Right cardiac atrium (tissue), 5 donors: ENCODE measurements at regions of chr1 and their contacts with region 1.

Region 1: GRCh38 chr1:11645670-11646265 is 8.5 kb downstream of the FBXO2 start:
- DNase-seq: peak; percentile 81 to 92 (median 91)
- ATAC-seq: peak in 1 of 2 donors; percentile 42
- H3K4me3 ChIP-seq: no peak overlapping the region
- H3K27ac ChIP-seq: no peak overlapping the region
- H3K4me1 ChIP-seq: peaks cover 2% of the 10 kb centered on the region
- H3K27me3 ChIP-seq: no peaks in the 10 kb centered on the region

Region 2: GRCh38 chr1:11045428-11046269 is 600.1 kb before region 1 on chr1:
- intact Hi-C with region 1: loop called in 2 of 4 experiments (anchors 5 to 10 kb)
- DNase-seq: peak in 1 of 3 donors; percentile 50
- ATAC-seq: peak in 1 of 2 donors; percentile 30
- H3K4me3 ChIP-seq: no peak overlapping the region
- H3K27ac ChIP-seq: no peak overlapping the region
- H3K4me1 ChIP-seq: no peaks in the 10 kb centered on the region
- H3K27me3 ChIP-seq: no peaks in the 10 kb centered on the region

Region 3: DNA sequence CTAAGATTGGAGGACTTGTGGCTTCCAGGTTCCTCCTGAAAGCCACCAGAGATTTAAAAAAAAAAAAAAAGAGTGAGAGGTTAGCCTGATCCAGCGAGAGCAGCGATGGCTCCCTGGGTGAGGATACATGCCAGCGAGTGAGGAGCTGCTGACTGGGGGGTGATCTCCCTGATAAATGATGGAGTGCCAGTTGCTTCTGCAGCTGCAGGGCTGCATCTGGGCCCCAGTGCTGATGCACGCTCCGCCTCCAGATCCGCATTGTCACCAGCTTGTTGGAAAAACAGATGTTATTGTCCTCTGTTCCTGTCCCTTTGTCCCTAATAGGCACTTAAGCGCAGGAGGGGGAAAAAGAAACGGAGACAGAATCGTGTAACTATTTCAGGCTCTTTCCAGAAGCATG is 344.2 kb before region 1 on chr1:
- intact Hi-C with region 1: no loop called
- DNase-seq: peak in 1 of 3 donors; percentile 7
- ATAC-seq: no peak
- H3K4me3 ChIP-seq: no peak overlapping the region
- H3K27ac ChIP-seq: no peak overlapping the region
- H3K4me1 ChIP-seq: no peaks in the 10 kb centered on the region
- H3K27me3 ChIP-seq: no peaks in the 10 kb centered on the region

Region 4: DNA sequence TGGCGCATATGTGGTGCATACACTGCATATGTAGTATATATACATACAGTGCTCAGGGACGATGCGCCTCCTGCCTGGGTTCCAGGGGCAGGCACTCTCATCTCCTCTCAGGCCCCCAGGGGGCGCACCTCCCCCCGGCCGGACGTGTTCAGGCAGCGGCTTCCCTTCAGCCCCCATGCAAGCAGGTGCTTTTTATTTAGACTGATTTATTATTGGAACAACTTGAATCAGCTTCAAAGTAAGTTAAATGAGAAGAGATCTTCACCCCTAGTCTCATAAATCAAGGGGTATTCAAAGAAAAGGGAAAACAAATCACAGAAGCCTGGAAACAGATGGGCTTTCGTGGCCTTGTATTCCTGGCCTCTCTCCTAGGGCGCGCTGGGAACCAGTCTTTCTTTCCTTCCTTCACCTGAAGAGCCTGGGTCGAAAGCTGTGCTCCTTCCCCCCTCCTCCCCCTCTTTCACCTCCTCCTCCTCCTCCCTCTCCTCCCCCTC is 308.1 kb before region 1 on chr1:
- intact Hi-C with region 1: loop called in 2 of 4 experiments (anchors 5 to 10 kb)
- DNase-seq: peak; percentile 47 to 82 (median 78)
- ATAC-seq: peak in 1 of 2 donors; percentile 56
- H3K4me3 ChIP-seq: no peak overlapping the region
- H3K27ac ChIP-seq: no peak overlapping the region
- H3K4me1 ChIP-seq: no peaks in the 10 kb centered on the region
- H3K27me3 ChIP-seq: no peaks in the 10 kb centered on the region

Region 5: DNA sequence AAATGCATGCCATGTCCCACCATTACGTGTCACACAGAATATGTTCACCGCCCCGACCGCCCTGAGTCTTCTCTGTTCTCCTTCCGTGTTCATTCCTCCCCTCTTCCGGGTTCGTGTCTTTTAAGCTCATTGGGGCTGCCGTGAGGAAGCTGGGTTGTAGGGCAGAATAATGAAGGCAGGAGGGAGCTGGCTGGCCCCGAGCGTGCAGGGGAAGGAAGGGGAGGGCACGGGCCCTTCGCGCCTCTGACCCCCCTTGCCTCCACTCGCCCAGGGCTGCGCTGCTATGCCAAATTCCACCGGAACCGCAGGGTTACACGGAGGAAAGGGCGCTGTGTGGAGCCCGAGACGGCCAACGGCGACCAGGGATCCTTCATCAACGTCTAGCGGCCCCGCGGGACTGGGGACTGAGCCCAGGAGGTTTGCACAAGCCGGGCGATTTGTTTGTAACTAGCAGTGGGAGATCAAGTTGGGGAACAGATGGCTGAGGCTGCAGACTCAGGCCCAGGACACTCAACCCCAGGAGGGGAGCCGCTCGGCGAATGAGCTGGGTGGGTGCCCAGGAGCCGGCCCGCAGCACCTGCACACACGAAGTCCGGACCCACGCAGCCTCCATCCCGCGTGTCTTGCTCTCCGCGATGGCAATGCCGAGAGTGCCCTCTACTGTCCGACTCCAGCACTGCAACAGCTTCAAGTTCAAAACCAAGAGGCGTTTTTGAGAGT is 73.7 kb after region 1 on chr1:
- intact Hi-C with region 1: loop called in 3 of 4 experiments (anchors 5 kb)
- DNase-seq: peak; percentile 79 to 94 (median 90)
- ATAC-seq: peak; percentile 76 to 85
- H3K4me3 ChIP-seq: peak overlapping the region; percentile 41
- H3K27ac ChIP-seq: no peak overlapping the region
- H3K4me1 ChIP-seq: peaks cover 2% of the 10 kb centered on the region
- H3K27me3 ChIP-seq: no peaks in the 10 kb centered on the region